ENCODE measurements at regions of chr9 and their contacts with region 1.

Region 1: GRCh38 chr9:72364679-72365524 is at the start of gene ZFAND5:
- DNase-seq: peak; percentile 85 to 92 (median 90)
- ATAC-seq: peak; percentile 84
- H3K4me3 ChIP-seq: peak within 1 kb of the TSS; percentile 81
- H3K27ac ChIP-seq: peak within 1 kb of the TSS; percentile 92
- H3K4me1 ChIP-seq: peaks cover 3 to 6% of the 10 kb centered on the region in 2 experiments; a peak in 4 of 5 replicates
- H3K27me3 ChIP-seq: no peaks in the 10 kb centered on the region
- CTCF ChIP-seq: peak in 1 of 3 experiments; percentile 21; a peak in 1 of 6 replicates
- EP300 ChIP-seq: no peak
- POLR2A ChIP-seq: peak; percentile 94
- RAD21 ChIP-seq: peak in 1 of 2 experiments; percentile 29; a peak in 1 of 4 replicates
- polyA plus RNA-seq, gene ZFAND5: 12.7 TPM

Region 2: GRCh38 chr9:72390907-72391306 is 26.0 kb after region 1 on chr9:
- CTCF ChIA-PET with region 1: no interaction called
- POLR2A ChIA-PET with region 1: interaction called, 14 read pairs
- in situ Hi-C with region 1: no loop called
- intact Hi-C with region 1: no loop called
- DNase-seq: no peak
- ATAC-seq: no peak
- H3K4me3 ChIP-seq: no peak overlapping the region
- H3K27ac ChIP-seq: no peak overlapping the region
- H3K4me1 ChIP-seq: no peaks in the 10 kb centered on the region
- H3K27me3 ChIP-seq: peaks cover 0 to 6% of the 10 kb centered on the region in 2 experiments; a peak in 1 of 5 replicates
- CTCF ChIP-seq: no peak
- EP300 ChIP-seq: no peak
- POLR2A ChIP-seq: no peak
- RAD21 ChIP-seq: no peak

Region 3: DNA sequence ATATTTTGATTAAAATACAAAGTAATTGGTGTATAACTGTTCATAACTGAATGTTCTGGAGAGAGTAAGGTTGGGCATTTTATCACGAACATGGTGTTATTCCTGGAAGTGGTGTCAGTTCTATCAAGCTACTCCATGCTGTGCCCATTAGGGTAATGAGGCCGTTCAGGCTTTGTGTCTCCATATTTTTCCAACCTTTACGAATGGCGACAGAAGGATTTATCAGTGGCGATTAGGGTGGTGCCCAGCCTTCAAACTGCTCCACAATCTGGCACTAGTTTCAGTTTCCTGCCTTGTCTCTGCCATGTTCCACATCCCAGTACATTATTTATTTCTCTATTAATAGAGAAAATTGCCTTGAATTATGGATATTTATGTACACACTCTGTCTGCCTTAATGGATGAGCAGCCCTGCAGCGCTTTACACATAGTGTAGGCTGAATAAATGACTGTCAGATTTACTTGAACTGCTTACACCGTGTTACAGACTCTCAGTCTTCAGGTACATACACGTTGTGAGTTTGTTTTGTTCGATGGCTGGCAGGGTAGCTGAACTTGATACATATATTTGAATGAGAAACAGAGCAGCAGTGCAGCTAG is 132.6 kb after region 1 on chr9:
- CTCF ChIA-PET with region 1: no interaction called
- POLR2A ChIA-PET with region 1: no interaction called
- in situ Hi-C with region 1: no loop called
- intact Hi-C with region 1: loop called (anchors 10 kb)
- DNase-seq: no peak
- ATAC-seq: no peak; the same call in 2 of the 3 replicates
- H3K4me3 ChIP-seq: no peak overlapping the region
- H3K27ac ChIP-seq: no peak overlapping the region
- H3K4me1 ChIP-seq: no peaks in the 10 kb centered on the region; a peak in 2 of 5 replicates
- H3K27me3 ChIP-seq: no peaks in the 10 kb centered on the region
- CTCF ChIP-seq: no peak
- EP300 ChIP-seq: no peak
- POLR2A ChIP-seq: no peak
- RAD21 ChIP-seq: no peak